Activated CD8-positive, alpha-beta T cell treated with anti-CD3 and anti-CD28 coated beads for 36 hours (primary cell): ENCODE measurements at regions of chr17 and their contacts with region 1.

Region 1: DNA sequence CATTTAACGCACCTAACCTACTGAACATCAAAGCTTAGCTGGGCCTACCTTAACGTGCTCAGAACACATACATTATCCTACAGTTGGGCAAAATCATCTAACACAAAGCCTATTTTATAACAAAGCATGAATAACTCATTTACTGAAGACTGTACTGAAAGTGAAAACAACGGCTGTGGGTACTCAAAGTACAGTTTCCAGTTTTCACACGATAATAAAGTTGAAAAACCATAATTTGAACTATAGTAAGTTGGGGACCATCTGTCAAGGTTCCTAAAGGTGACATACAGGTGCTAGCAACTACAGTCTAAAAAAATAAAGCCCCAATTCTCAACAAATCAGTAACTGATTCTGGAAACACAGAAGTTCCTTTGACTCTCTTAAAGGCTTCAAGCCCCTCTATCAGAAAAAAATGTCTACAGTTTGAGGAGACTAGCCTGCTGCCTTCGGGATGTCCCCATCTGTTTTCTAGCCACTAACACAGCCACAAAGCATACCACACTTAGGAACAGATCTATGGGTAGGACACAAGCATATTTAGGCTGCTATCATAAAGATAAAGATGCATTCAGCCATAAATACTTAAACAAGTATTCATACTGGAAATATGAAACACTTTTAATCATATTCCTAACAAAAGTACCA is 71.3 kb downstream of the KANSL1 start:
- DNase-seq: peak; percentile 43
- ATAC-seq: peak; percentile 74
- H3K4me3 Mint-ChIP-seq: peak overlapping the region; percentile 34
- H3K27ac Mint-ChIP-seq: peak overlapping the region; percentile 62
- H3K4me1 Mint-ChIP-seq: peaks cover 81% of the 10 kb centered on the region
- H3K27me3 Mint-ChIP-seq: no peaks in the 10 kb centered on the region
- CTCF ChIP-seq: no peak

Region 2: GRCh38 chr17:46061435-46061834 is 60.5 kb before region 1 on chr17:
- CTCF ChIA-PET with region 1: no interaction called
- POLR2A ChIA-PET with region 1: no interaction called
- intact Hi-C with region 1: no loop called
- DNase-seq: no peak
- ATAC-seq: no peak
- H3K4me3 Mint-ChIP-seq: no peak overlapping the region
- H3K27ac Mint-ChIP-seq: no peak overlapping the region
- H3K4me1 Mint-ChIP-seq: peaks cover 38% of the 10 kb centered on the region
- H3K27me3 Mint-ChIP-seq: no peaks in the 10 kb centered on the region
- CTCF ChIP-seq: peak; percentile 54

Region 3: GRCh38 chr17:46089389-46089965 is 32.5 kb before region 1 on chr17:
- CTCF ChIA-PET with region 1: interaction called, 4 read pairs
- POLR2A ChIA-PET with region 1: no interaction called
- intact Hi-C with region 1: loop called (anchors 5 kb)
- DNase-seq: no peak
- ATAC-seq: no peak
- H3K4me3 Mint-ChIP-seq: no peak overlapping the region
- H3K27ac Mint-ChIP-seq: peak overlapping the region; percentile 57
- H3K4me1 Mint-ChIP-seq: peaks cover 60% of the 10 kb centered on the region
- H3K27me3 Mint-ChIP-seq: no peaks in the 10 kb centered on the region
- CTCF ChIP-seq: no peak

Region 4: GRCh38 chr17:46147296-46147695 is 25.3 kb after region 1 on chr17:
- CTCF ChIA-PET with region 1: interaction called, 4 read pairs
- POLR2A ChIA-PET with region 1: interaction called, 7 read pairs
- intact Hi-C with region 1: loop called (anchors 2 kb)
- DNase-seq: peak; percentile 69
- ATAC-seq: peak; percentile 45
- H3K4me3 Mint-ChIP-seq: peak overlapping the region; percentile 25
- H3K27ac Mint-ChIP-seq: peak overlapping the region; percentile 77
- H3K4me1 Mint-ChIP-seq: peaks cover 81% of the 10 kb centered on the region
- H3K27me3 Mint-ChIP-seq: no peaks in the 10 kb centered on the region
- CTCF ChIP-seq: no peak

Region 5: GRCh38 chr17:46179375-46179999 is 57.5 kb after region 1 on chr17:
- CTCF ChIA-PET with region 1: interaction called, 3 read pairs
- POLR2A ChIA-PET with region 1: interaction called, 3 read pairs
- intact Hi-C with region 1: loop called (anchors 5 kb)
- DNase-seq: no peak
- ATAC-seq: peak; percentile 61
- H3K4me3 Mint-ChIP-seq: peak overlapping the region; percentile 50
- H3K27ac Mint-ChIP-seq: peak overlapping the region; percentile 89
- H3K4me1 Mint-ChIP-seq: peaks cover 86% of the 10 kb centered on the region
- H3K27me3 Mint-ChIP-seq: no peaks in the 10 kb centered on the region
- CTCF ChIP-seq: no peak

Region 6: DNA sequence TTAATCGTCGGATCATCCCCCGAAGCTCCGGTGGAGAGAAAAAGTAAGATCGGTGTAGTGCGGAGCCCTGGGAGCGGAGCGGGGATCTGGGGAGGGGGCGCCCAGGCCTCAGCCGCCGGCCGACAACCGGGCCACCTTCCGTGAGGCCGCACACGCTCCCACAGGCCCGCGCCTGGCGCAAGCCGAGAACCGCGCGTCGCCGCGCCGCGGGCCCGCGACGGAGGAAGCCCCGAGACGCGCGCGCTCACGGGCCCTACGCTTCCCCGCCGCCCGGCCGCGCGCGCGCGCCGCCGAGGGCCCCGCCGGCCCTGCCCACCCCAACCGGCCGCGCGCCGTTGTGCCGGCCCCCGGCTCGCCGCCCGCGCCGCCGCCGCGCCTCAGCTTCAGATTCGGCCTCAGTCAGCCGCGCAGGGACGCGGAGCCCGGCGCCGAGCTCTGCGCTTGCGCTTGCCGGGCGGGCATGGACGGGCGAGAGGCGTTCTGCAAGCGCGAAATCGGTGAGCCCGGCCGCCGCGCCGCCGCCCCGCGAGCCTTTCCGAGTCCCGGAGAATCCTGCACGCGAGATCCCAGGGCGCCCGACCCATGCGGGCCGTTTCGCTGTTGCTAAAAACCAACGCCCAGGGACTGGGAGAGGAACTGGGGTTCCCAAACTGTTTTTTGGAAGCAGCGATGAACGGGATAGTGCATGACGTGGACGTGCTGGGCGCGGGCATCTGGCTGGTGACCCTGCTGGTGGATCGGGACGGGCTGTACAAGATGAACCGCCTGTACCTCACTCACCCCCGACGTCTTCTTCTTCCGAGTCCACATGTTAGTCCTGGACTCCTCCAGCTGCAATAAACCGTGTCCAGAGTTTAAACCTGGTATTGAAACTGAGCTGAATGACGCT is 144.9 kb after region 1 on chr17:
- CTCF ChIA-PET with region 1: no interaction called
- POLR2A ChIA-PET with region 1: no interaction called
- intact Hi-C with region 1: no loop called
- DNase-seq: peak; percentile 84
- ATAC-seq: peak; percentile 88
- H3K4me3 Mint-ChIP-seq: peak overlapping the region; percentile 80
- H3K27ac Mint-ChIP-seq: peak overlapping the region; percentile 74
- H3K4me1 Mint-ChIP-seq: peaks cover 27% of the 10 kb centered on the region
- H3K27me3 Mint-ChIP-seq: no peaks in the 10 kb centered on the region
- CTCF ChIP-seq: no peak